Transverse colon (tissue), 4 donors: ENCODE measurements at regions of chr6 and their contacts with region 1.

Region 1: DNA sequence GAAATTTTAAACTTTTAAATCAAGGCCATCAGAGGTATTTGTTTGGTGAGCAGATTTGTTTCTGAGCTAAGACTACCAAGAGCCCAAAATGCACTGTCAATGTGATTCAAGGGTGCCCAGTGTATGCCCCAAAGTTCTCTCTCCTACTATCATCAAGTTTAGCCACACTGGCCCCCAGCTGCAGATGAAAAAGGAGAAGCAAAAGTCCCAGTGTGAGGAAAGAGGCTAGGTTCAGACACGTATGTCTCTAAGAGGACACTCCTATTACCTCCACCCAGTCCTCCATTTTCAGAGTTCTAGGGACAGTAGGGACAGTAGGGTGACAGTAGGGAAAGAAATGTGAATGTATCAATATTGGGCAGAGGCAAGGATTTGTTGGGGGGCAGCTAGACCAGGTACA is 230.8 kb downstream of the CD83 start:
- DNase-seq: no peak
- H3K4me3 ChIP-seq: no peak overlapping the region
- H3K27ac ChIP-seq: no peak overlapping the region
- H3K4me1 ChIP-seq: no peaks in the 10 kb centered on the region
- H3K27me3 ChIP-seq: no peaks in the 10 kb centered on the region
- CTCF ChIP-seq: no peak
- EP300 ChIP-seq: no peak
- POLR2A ChIP-seq: no peak

Region 2: DNA sequence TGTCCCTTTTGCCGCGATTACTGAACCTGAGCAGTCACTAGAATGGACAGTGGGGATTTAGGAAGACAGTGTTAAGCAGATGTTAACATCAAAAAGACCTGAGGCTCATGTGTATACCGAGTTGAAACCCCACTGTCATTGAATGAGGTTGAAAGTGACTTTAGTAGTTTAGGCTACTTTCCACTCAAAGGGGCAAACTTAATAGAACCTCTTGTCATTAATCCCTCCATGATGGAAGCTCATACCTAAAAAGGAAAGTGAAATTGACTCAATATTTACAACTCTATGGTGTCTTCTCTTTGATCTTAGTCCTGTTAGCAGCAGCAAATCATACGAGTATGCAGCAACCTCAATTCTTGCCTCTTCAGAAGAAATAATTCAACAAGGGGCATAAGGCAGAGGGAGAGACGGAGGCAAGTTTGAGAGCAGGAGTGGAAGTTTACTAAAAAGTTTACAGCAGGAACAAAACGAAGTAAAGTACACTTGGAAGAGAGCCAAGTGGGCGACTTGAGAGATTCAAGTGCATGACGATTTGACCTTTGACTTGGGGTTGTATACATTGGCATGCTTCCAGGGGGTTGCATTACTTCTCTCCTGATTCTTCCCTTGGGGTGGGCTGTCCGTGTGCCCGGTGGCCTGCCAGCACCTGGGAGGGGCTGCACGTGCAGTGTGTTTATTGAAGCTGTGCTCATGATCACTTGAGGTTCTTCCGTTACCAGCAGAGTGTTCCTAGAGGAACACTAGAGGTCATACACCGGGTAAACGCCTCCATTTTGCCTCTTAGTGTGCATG is 1607.8 kb after region 1 on chr6:
- in situ Hi-C with region 1: no loop called
- intact Hi-C with region 1: loop called (anchors 5 kb)
- DNase-seq: peak; percentile 77
- H3K4me3 ChIP-seq: no peak overlapping the region
- H3K27ac ChIP-seq: peak overlapping the region in 3 of 4 donors; percentile 19 to 60 (median 37)
- H3K4me1 ChIP-seq: peaks cover 0 to 27% (median 14%) of the 10 kb centered on the region in 4 donors
- H3K27me3 ChIP-seq: no peaks in the 10 kb centered on the region
- CTCF ChIP-seq: no peak
- EP300 ChIP-seq: peak; percentile 29
- POLR2A ChIP-seq: no peak